ENCODE measurements at regions of chr11 and their contacts with region 1.

Region 1: DNA sequence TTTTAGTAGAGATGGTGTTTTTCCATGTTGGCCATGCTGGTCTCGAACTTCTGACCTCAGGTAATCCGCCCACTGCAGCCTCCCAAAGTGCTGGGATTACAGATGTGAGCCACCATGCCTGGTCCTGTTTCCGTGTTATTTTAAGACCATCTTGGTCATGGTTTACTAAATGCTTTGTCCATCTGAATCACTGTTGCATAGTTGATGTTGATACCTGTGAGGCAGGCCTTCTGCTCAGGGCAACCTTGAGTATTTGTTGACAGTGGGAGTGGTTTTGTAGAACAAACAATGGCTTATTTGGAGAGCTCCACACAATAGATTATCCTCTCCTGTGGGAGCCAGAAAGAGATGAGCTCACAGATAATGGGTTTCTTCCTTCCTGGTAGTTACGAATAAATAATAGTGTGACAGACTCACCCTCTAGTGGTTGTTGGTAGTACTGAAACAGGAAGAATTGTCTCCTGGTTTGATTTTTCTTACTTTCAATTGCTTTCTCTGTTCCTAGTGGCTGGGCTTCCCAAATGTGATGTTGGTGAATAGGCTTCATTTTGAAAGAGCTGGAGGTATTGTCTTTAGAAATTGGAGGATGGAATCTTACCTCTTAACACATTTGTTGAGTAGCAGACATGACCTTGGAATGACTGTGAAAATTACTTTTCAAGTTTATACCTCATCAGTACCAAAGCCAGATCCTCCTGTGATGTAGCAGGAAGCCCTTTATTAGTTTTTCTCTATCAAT is 39.0 kb downstream of the CTNND1 start:
- DNase-seq: no peak
- H3K4me3 ChIP-seq: no peak overlapping the region
- CTCF ChIP-seq: peak; percentile 66

Region 2: GRCh38 chr11:57480409-57481137 is 320.0 kb before region 1 on chr11:
- CTCF ChIA-PET with region 1: no interaction called
- POLR2A ChIA-PET with region 1: no interaction called
- DNase-seq: no peak
- H3K4me3 ChIP-seq: no peak overlapping the region
- CTCF ChIP-seq: peak; percentile 83

Region 3: DNA sequence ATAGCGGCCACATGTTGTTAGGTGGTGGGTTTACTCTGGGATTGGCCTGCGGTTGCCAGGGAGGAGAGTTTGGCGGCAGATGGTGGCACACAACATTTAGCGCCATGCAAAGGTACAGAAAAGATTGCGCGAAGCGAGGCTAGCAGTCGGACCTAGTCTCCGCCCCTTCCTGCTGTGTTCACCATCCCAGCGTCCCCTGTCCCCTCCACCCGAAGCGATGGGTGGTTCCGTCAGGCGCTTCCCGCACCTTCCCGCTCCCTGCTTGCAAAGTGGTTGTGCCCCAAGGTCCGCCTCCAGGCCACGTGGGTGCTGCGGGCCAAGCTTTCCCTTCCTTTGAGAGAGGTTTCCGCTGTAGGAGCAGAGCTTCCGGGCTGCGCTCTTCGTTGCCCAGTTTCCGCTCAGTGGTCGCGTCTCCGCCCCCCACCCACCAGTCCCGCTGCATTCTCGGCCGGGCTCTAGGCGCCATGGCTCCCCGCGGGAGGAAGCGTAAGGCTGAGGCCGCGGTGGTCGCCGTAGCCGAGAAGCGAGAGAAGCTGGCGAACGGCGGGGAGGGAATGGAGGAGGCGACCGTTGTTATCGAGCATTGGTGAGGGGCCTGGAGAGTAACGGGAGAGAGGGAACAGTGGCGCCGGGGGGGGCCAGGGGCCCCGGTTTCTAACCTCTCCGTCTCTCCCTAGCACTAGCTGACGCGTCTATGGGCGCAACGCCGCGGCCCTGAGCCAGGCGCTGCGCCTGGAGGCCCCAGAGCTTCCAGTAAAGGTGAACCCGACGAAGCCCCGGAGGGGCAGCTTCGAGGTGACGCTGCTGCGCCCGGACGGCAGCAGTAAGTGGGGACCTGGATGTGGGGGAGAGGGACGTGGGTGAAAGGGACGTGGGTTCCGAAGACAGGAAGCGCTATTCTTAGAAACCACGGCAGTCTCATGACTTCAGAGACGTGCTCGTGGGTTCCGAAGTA is 59.2 kb before region 1 on chr11 and contains the start of gene SELENOH:
- CTCF ChIA-PET with region 1: interaction called, 200 read pairs
- POLR2A ChIA-PET with region 1: interaction called, 7 read pairs
- DNase-seq: peak; percentile 78
- H3K4me3 ChIP-seq: peak within 1 kb of the TSS; percentile 93
- CTCF ChIP-seq: no peak

Region 4: GRCh38 chr11:57761301-57762234 is 39.0 kb before region 1 on chr11 and contains the start of gene CTNND1:
- CTCF ChIA-PET with region 1: interaction called, 315 read pairs
- POLR2A ChIA-PET with region 1: interaction called, 7 read pairs
- DNase-seq: peak; percentile 90
- H3K4me3 ChIP-seq: peak within 1 kb of the TSS; percentile 88
- CTCF ChIP-seq: no peak

Region 5: GRCh38 chr11:57786436-57786835 is 14.2 kb before region 1 on chr11:
- CTCF ChIA-PET with region 1: interaction called, 114 read pairs
- POLR2A ChIA-PET with region 1: no interaction called
- DNase-seq: no peak
- H3K4me3 ChIP-seq: no peak overlapping the region
- CTCF ChIP-seq: no peak

Region 6: DNA sequence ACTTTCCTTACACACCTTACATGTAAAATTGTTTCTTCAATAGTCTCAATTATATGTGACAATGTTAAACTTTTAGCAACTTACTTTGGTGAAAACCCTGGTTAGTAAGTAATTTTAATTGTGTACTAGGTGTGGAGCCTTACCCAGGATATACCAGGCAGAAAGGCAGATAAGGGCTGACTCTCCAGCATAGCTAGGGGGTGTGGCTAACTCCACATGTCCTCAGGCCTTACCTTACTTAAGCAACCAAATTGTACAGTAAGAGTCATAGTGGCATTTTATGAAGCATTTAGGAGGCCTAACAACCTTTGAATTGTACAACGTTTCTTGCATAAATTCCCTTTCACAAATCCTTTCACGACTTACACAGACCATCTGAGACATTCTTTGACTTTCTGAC is 104.8 kb after region 1 on chr11:
- CTCF ChIA-PET with region 1: no interaction called
- POLR2A ChIA-PET with region 1: no interaction called
- DNase-seq: no peak
- H3K4me3 ChIP-seq: no peak overlapping the region
- CTCF ChIP-seq: no peak

Region 7: GRCh38 chr11:58006940-58007339 is 206.3 kb after region 1 on chr11:
- CTCF ChIA-PET with region 1: no interaction called
- POLR2A ChIA-PET with region 1: no interaction called
- DNase-seq: no peak
- H3K4me3 ChIP-seq: no peak overlapping the region
- CTCF ChIP-seq: no peak

Region 8: DNA sequence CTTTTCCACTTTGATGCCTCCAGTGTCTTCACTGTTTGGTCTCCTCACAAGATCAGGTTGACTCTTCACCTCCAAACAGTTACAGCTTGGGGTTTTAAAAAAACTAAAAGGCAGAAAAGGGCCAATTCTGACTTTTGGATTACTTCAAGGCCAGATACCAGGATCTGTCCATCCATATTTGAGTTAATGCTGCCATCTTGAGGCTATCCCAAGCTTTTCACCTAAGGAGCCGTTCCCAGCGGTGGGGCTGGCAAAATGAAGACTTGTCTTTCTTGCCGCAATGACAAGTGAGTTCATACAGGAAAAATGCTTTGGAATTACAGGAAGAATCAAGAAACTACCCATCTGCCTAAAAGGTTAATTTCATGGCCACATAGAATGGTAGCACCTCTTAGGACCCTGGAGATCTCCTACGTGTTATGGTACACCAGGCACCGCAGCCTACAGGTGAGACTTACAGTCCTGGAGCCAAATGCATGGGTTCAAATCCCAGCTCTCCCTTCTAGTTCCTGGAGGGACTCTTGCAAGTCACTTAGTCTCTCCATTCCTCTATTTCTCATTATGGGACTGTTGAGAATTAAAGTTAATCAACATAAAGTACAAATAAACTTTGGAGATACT is 713.2 kb after region 1 on chr11:
- CTCF ChIA-PET with region 1: interaction called, 19 read pairs
- POLR2A ChIA-PET with region 1: interaction called, 3 read pairs
- DNase-seq: no peak
- H3K4me3 ChIP-seq: no peak overlapping the region
- CTCF ChIP-seq: peak; percentile 48